ENCODE measurements at regions of chr6 and their contacts with region 1.

Region 1: GRCh38 chr6:44246663-44247337 is at the start of gene HSP90AB1:
- DNase-seq: peak; percentile 98
- ATAC-seq: peak; percentile 65
- H3K4me3 ChIP-seq: peak within 1 kb of the TSS; percentile 81 to 97 (median 87)
- H3K27ac ChIP-seq: peak within 1 kb of the TSS; percentile 96
- H3K4me1 ChIP-seq: peaks cover 72% of the 10 kb centered on the region
- H3K27me3 ChIP-seq: no peaks in the 10 kb centered on the region; a peak in 1 of 5 replicates
- CTCF ChIP-seq: no peak
- EP300 ChIP-seq: peak; percentile 37 to 65; a peak in 3 of 4 replicates
- POLR2A ChIP-seq: peak in 1 of 2 experiments; percentile 100; a peak in 2 of 4 replicates
- RAD21 ChIP-seq: peak; percentile 22; the same call in 1 of the 2 replicates
- total RNA-seq, gene HSP90AB1: 1,472 and 2,212 TPM in 2 replicates

Region 2: GRCh38 chr6:43629505-43630300 is 617.1 kb before region 1 on chr6:
- CTCF ChIA-PET with region 1: no interaction called
- POLR2A ChIA-PET with region 1: interaction called, 12 read pairs
- in situ Hi-C with region 1: no loop called
- intact Hi-C with region 1: no loop called
- DNase-seq: peak; percentile 98
- ATAC-seq: peak; percentile 86
- H3K4me3 ChIP-seq: peak overlapping the region; percentile 64 to 85 (median 76)
- H3K27ac ChIP-seq: peak overlapping the region; percentile 87
- H3K4me1 ChIP-seq: peaks cover 36% of the 10 kb centered on the region
- H3K27me3 ChIP-seq: no peaks in the 10 kb centered on the region; a peak in 1 of 5 replicates
- CTCF ChIP-seq: no peak; the same call in 1 of the 2 replicates
- EP300 ChIP-seq: 0 out of 4 replicates have a peak, but pooled peaks of 1 of the 2 experiments have one; percentile 16
- POLR2A ChIP-seq: peak; percentile 86 to 93
- RAD21 ChIP-seq: 0 out of 2 replicates have a peak, but pooled peaks have one; percentile 15

Region 3: GRCh38 chr6:44074439-44075136 is 172.2 kb before region 1 on chr6:
- CTCF ChIA-PET with region 1: no interaction called
- POLR2A ChIA-PET with region 1: no interaction called
- in situ Hi-C with region 1: no loop called
- intact Hi-C with region 1: no loop called
- DNase-seq: peak; percentile 78
- ATAC-seq: peak; percentile 64
- H3K4me3 ChIP-seq: peak overlapping the region; percentile 23 to 74 (median 46)
- H3K27ac ChIP-seq: peak overlapping the region; percentile 57
- H3K4me1 ChIP-seq: peaks cover 85% of the 10 kb centered on the region
- H3K27me3 ChIP-seq: no peaks in the 10 kb centered on the region
- CTCF ChIP-seq: peak; percentile 99
- EP300 ChIP-seq: no peak
- POLR2A ChIP-seq: no peak
- RAD21 ChIP-seq: peak; percentile 85

Region 4: DNA sequence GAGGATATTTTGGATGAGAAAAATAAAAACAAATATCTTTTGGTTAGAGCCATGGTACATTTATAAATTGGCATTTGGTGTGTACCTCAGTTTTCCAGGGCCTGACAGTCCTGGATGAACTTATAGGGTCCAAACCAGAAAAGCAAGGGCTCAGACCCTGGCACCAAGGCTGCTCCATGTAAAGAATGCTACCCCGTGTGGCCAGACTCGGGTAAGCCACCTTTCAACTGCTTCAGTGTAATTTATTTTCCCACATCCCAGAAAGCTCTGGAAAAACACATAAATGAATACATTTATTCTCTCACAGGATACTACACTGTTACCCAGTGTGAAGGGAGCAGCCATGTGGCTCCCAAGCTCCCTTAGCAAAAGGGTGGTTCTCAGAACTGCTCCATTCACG is 133.4 kb before region 1 on chr6:
- CTCF ChIA-PET with region 1: no interaction called
- POLR2A ChIA-PET with region 1: interaction called, 14 read pairs
- in situ Hi-C with region 1: no loop called
- intact Hi-C with region 1: no loop called
- DNase-seq: no peak
- ATAC-seq: peak; percentile 53
- H3K4me3 ChIP-seq: no peak overlapping the region
- H3K27ac ChIP-seq: peak overlapping the region; percentile 19
- H3K4me1 ChIP-seq: peaks cover 86% of the 10 kb centered on the region
- H3K27me3 ChIP-seq: no peaks in the 10 kb centered on the region
- CTCF ChIP-seq: peak; percentile 32; the same call in 1 of the 2 replicates
- EP300 ChIP-seq: no peak
- POLR2A ChIP-seq: no peak
- RAD21 ChIP-seq: peak; percentile 32; the same call in 1 of the 2 replicates

Region 5: DNA sequence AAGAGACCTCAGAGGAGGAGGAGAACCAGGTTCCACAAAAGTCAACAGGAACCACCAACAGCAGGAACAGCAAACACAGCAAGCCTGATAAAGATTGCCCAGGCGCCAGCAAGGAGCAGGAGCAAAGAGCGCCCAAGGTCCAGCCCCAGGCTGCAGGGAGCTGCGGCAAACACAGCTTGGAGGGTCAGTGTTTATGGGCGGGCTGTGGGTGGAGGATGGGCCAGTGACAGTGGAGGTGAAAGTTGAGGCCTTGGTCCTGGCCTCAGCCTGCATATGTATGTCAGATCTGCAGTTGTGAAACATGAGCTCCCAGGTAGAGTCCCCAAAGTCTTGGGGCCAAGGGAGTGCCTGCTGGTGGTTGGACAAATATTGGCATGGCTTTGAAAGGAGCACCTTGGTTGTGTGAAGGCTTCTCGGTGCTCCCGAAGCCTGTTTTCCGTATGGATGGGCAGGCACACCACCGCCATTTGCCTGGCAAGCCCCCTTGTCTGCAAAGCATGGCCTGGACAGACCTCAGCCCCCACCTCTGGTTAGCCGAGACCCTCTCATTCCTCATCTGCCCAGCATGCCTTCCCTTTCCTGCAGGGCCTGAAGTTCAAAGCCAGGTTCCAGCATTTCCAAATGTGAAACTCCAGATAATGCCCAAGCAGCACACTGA is 90.2 kb before region 1 on chr6:
- CTCF ChIA-PET with region 1: no interaction called
- POLR2A ChIA-PET with region 1: interaction called, 27 read pairs
- in situ Hi-C with region 1: no loop called
- intact Hi-C with region 1: no loop called
- DNase-seq: peak; percentile 97
- ATAC-seq: peak; percentile 92
- H3K4me3 ChIP-seq: peak overlapping the region; percentile 9 to 53 (median 29)
- H3K27ac ChIP-seq: peak overlapping the region; percentile 85
- H3K4me1 ChIP-seq: peaks cover 71% of the 10 kb centered on the region
- H3K27me3 ChIP-seq: no peaks in the 10 kb centered on the region
- CTCF ChIP-seq: no peak; the same call in 1 of the 2 replicates
- EP300 ChIP-seq: peak; percentile 92 to 96
- POLR2A ChIP-seq: no peak; a peak in 2 of 4 replicates
- RAD21 ChIP-seq: peak; percentile 42; the same call in 1 of the 2 replicates

Region 6: DNA sequence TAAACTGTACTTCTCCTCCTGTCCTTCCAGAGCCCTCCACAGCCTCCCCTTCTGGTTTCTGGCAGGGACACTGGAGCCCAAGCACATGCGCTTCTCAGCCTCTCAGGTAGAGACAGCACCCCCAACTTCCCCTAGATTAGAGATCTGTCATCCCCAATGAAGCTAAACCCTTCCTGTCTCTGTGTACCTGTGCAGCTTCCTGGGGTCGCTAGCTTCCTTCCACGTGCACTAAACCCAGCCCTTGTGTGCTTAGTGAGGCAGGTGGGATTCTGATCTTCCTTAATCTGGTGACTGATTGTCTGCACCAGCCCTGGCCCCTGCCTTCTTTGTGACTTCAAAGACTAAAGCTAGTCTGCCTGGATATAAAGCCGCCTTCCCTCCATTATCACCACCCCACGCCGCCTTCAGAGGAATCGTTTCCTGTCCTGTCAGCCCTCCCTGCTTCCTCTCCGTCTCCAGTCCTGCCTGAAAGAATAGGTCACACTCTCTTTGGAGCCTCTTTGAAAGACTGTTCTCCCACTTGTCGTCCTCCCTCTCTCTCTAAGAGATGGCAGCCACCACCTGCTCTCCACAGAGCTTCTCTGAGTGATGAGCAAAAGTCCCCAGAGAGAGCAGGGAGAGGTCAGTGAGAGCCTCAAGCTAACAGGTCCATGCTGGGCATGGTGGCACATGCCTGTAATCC is 60.7 kb before region 1 on chr6:
- CTCF ChIA-PET with region 1: no interaction called
- POLR2A ChIA-PET with region 1: interaction called, 10 read pairs
- in situ Hi-C with region 1: no loop called
- intact Hi-C with region 1: no loop called
- DNase-seq: no peak
- ATAC-seq: peak; percentile 50
- H3K4me3 ChIP-seq: 0 out of 6 replicates have a peak overlapping the region, but pooled peaks of 1 of the 3 experiments have one; percentile 2
- H3K27ac ChIP-seq: no peak overlapping the region
- H3K4me1 ChIP-seq: peaks cover 59% of the 10 kb centered on the region
- H3K27me3 ChIP-seq: peaks cover 0 to 4% of the 10 kb centered on the region in 2 experiments; a peak in 3 of 5 replicates
- CTCF ChIP-seq: no peak
- EP300 ChIP-seq: no peak
- POLR2A ChIP-seq: no peak
- RAD21 ChIP-seq: no peak

Region 7: GRCh38 chr6:44257025-44257752 is 10.4 kb after region 1 on chr6 and contains the start of gene SLC35B2:
- CTCF ChIA-PET with region 1: no interaction called
- POLR2A ChIA-PET with region 1: interaction called, 264 read pairs
- in situ Hi-C with region 1: no loop called
- intact Hi-C with region 1: no loop called
- DNase-seq: peak; percentile 88
- ATAC-seq: peak; percentile 71
- H3K4me3 ChIP-seq: peak within 1 kb of the TSS; percentile 66 to 84 (median 71)
- H3K27ac ChIP-seq: peak within 1 kb of the TSS; percentile 93
- H3K4me1 ChIP-seq: peaks cover 53% of the 10 kb centered on the region
- H3K27me3 ChIP-seq: no peaks in the 10 kb centered on the region; a peak in 1 of 5 replicates
- CTCF ChIP-seq: peak; percentile 73
- EP300 ChIP-seq: peak in 1 of 2 experiments; percentile 10; a peak in 1 of 4 replicates
- POLR2A ChIP-seq: peak in 1 of 2 experiments; percentile 70; a peak in 2 of 4 replicates
- RAD21 ChIP-seq: no peak
- total RNA-seq, gene SLC35B2: 34.9 and 61.1 TPM in 2 replicates

Region 8: GRCh38 chr6:44285552-44286284 is 38.9 kb after region 1 on chr6:
- CTCF ChIA-PET with region 1: no interaction called
- POLR2A ChIA-PET with region 1: no interaction called
- in situ Hi-C with region 1: no loop called
- intact Hi-C with region 1: no loop called
- DNase-seq: no peak
- ATAC-seq: peak; percentile 36; the same call in 2 of the 3 replicates
- H3K4me3 ChIP-seq: no peak overlapping the region
- H3K27ac ChIP-seq: no peak overlapping the region
- H3K4me1 ChIP-seq: no peaks in the 10 kb centered on the region
- H3K27me3 ChIP-seq: peaks cover 1 to 75% of the 10 kb centered on the region in 2 experiments
- CTCF ChIP-seq: no peak
- EP300 ChIP-seq: no peak
- POLR2A ChIP-seq: no peak
- RAD21 ChIP-seq: no peak

Region 9: GRCh38 chr6:44297063-44298038 is 50.6 kb after region 1 on chr6:
- CTCF ChIA-PET with region 1: no interaction called
- POLR2A ChIA-PET with region 1: no interaction called
- in situ Hi-C with region 1: no loop called
- intact Hi-C with region 1: no loop called
- DNase-seq: no peak
- ATAC-seq: peak; percentile 27
- H3K4me3 ChIP-seq: peak overlapping the region in 1 of 3 experiments; percentile 39; a peak in 2 of 6 replicates
- H3K27ac ChIP-seq: no peak overlapping the region
- H3K4me1 ChIP-seq: no peaks in the 10 kb centered on the region
- H3K27me3 ChIP-seq: peaks cover 0 to 17% of the 10 kb centered on the region in 2 experiments; a peak in 2 of 5 replicates
- CTCF ChIP-seq: no peak
- EP300 ChIP-seq: no peak
- POLR2A ChIP-seq: no peak
- RAD21 ChIP-seq: no peak

Region 10: DNA sequence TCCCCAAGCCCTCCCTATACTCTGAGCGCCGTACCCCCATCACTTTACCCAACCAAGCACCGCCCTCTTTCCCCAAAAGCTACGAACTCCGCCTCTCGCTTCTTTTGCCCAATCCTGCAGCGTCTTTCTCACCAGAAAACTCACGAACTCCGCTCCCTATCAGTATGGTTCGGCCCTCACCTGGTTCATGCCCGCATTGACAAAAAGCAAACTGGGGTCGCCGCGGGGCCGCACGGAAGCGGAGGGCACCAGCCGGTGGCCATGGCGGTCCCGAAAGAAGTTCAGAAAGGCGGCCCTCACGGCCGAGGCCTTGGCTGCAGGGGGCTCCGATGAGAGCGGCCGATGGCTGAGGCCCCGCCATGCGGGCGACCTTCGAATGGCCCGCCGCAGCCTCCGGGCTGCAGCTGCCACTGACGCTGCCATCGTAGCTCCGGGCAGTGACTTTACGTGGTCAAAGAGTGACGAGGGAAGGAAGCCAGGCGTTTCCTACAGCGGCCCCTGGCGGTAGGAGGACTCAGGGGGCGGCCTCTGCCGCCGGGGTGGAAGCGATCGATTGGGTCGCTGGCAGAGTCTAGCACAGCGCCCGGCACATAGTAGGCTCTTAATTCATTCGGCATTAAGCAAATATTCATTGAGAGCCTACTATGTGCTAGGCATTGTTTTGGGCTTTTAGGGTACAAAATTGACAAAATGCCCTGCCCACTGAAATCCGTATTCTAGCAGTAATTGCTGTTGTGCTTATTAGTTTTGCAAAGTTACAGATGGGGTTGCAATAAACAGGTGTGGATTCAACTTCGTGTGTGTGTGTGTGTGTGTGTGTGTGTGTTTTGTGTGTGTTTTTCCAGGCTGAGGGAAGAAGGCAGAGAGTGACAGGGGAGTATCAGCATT is 66.3 kb after region 1 on chr6 and contains the start of gene AARS2:
- CTCF ChIA-PET with region 1: no interaction called
- POLR2A ChIA-PET with region 1: interaction called, 10 read pairs
- in situ Hi-C with region 1: no loop called
- intact Hi-C with region 1: no loop called
- DNase-seq: peak; percentile 87
- ATAC-seq: peak; percentile 96
- H3K4me3 ChIP-seq: peak within 1 kb of the TSS; percentile 92 to 97 (median 96)
- H3K27ac ChIP-seq: peak within 1 kb of the TSS; percentile 58
- H3K4me1 ChIP-seq: peaks cover 22% of the 10 kb centered on the region
- H3K27me3 ChIP-seq: peaks cover 0 to 17% of the 10 kb centered on the region in 2 experiments; a peak in 2 of 5 replicates
- CTCF ChIP-seq: peak; percentile 99
- EP300 ChIP-seq: peak; percentile 51 to 71; a peak in 2 of 4 replicates
- POLR2A ChIP-seq: peak; percentile 94 to 99
- RAD21 ChIP-seq: peak; percentile 69
- total RNA-seq, gene AARS2: 13.7 and 24.1 TPM in 2 replicates

Region 11: GRCh38 chr6:44353336-44353735 is 106.5 kb after region 1 on chr6:
- CTCF ChIA-PET with region 1: no interaction called
- POLR2A ChIA-PET with region 1: no interaction called
- in situ Hi-C with region 1: no loop called
- intact Hi-C with region 1: no loop called
- DNase-seq: no peak
- ATAC-seq: no peak
- H3K4me3 ChIP-seq: no peak overlapping the region
- H3K27ac ChIP-seq: no peak overlapping the region
- H3K4me1 ChIP-seq: peaks cover 11% of the 10 kb centered on the region
- H3K27me3 ChIP-seq: peaks cover 0 to 3% of the 10 kb centered on the region in 2 experiments; a peak in 1 of 5 replicates
- CTCF ChIP-seq: no peak
- EP300 ChIP-seq: no peak
- POLR2A ChIP-seq: no peak
- RAD21 ChIP-seq: no peak